Sigmoid colon (tissue), 7 donors: ENCODE measurements at regions of chr5 and their contacts with region 1.

Region 1: DNA sequence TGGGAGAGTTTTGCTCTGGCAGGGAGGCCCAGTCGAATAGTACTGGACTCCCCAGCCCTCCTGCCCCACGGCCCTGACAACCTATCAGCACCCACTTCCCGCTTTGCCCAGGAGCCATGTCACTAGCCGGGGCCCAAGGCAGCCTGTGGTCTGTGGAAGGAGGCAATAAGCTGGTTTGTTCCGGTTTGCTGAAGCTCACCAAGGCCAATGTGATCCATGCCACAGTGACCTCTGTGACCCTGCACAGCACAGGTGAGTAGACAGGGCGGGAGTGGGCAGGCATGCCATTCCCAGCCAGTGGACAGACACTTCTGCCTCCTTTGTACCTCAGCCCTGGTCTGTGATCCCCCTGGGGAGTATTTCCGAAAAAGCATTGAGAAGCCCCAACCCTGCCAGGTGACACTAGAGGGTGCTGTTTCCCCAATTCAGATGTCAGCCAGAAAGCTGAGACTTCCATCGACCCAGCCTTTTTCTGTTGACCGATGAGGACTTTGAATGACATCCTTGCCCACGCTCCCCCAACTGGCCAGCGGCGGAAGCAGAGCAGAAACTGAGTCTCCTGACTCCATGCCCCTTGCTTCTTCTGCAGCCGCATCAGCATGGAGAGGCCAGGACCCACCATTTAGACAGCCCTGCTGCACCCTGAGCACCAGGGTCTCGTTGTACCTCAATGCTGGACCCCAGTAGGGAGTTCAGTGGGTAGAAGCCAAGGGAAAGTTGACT is 9.6 kb downstream of the PCYOX1L start:
- DNase-seq: peak; percentile 84
- H3K4me3 ChIP-seq: peak overlapping the region in 2 of 4 donors; percentile 15 to 20
- H3K27ac ChIP-seq: peak overlapping the region; percentile 59 to 80 (median 69)
- H3K4me1 ChIP-seq: peaks cover 0 to 37% (median 36%) of the 10 kb centered on the region in 4 donors
- H3K27me3 ChIP-seq: no peaks in the 10 kb centered on the region
- CTCF ChIP-seq: peak; percentile 61 to 82 (median 70)
- EP300 ChIP-seq: no peak
- POLR2A ChIP-seq: no peak

Region 2: GRCh38 chr5:149561848-149562247 is 194.4 kb after region 1 on chr5:
- intact Hi-C with region 1: loop called (anchors 5 kb)
- DNase-seq: no peak
- H3K4me3 ChIP-seq: peak overlapping the region in 1 of 4 donors; percentile 10
- H3K27ac ChIP-seq: peak overlapping the region; percentile 78 to 91 (median 84)
- H3K4me1 ChIP-seq: peaks cover 0 to 43% (median 38%) of the 10 kb centered on the region in 4 donors
- H3K27me3 ChIP-seq: no peaks in the 10 kb centered on the region
- CTCF ChIP-seq: no peak
- EP300 ChIP-seq: peak in 2 of 4 donors; percentile 27 to 59
- POLR2A ChIP-seq: no peak

Region 3: GRCh38 chr5:149646564-149646963 is 279.2 kb after region 1 on chr5:
- intact Hi-C with region 1: no loop called
- DNase-seq: no peak
- H3K4me3 ChIP-seq: no peak overlapping the region
- H3K27ac ChIP-seq: no peak overlapping the region
- H3K4me1 ChIP-seq: peaks cover 0 to 4% (median 0%) of the 10 kb centered on the region in 4 donors
- H3K27me3 ChIP-seq: no peaks in the 10 kb centered on the region
- CTCF ChIP-seq: no peak
- EP300 ChIP-seq: no peak
- POLR2A ChIP-seq: no peak